CD14-positive monocyte (primary cell): ENCODE measurements at regions of chr10 and their contacts with region 1.

Region 1: GRCh38 chr10:5293691-5294550 is 70.8 kb upstream of the UCN3 start:
- DNase-seq: peak; percentile 70 to 82 (median 77)
- H3K4me3 ChIP-seq: peak overlapping the region in 1 of 3 experiments; percentile 15
- H3K4me3 Mint-ChIP-seq: peak overlapping the region; percentile 46 to 52
- H3K27ac ChIP-seq: peak overlapping the region; percentile 57 to 72
- H3K27ac Mint-ChIP-seq: peak overlapping the region; percentile 81 to 100 (median 99)
- H3K4me1 ChIP-seq: peaks cover 75 to 88% of the 10 kb centered on the region in 2 donors
- H3K4me1 Mint-ChIP-seq: peaks cover 77% of the 10 kb centered on the region
- H3K27me3 ChIP-seq: no peaks in the 10 kb centered on the region
- H3K27me3 Mint-ChIP-seq: peaks cover 0 to 4% (median 0%) of the 10 kb centered on the region in 3 donors
- CTCF ChIP-seq: peak; percentile 82

Region 2: DNA sequence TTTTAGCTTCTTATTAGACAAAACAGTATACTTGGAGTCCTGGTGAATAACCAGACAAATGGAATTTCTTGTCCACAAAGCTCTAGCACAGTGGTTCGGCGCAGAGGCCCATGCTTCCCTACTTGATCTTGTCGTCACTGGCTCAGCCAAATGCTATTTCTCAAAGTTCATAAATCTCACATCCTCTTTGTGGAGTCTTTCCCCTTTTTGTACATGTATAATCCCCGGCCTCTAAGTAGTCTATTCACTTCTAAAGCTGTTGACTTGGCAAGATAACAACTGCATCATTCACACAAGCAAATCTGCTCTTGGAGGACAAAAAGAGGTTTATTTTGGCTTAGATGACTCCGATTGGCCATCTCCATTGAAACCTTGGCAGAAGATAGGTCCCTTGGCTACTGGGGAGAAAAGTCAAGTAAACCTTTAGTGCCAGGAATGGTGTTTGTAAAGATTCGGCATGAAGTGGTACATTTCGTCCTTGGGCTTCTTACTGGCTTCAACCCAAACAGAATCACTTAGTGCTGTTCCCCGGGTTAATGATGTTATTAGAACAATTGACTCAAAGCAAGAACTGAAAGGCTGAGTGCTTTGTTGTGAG is 473.0 kb before region 1 on chr10:
- intact Hi-C with region 1: loop called in 1 of 2 experiments (anchors 5 kb)
- DNase-seq: peak; percentile 53 to 69 (median 55)
- H3K4me3 ChIP-seq: no peak overlapping the region
- H3K4me3 Mint-ChIP-seq: no peak overlapping the region
- H3K27ac ChIP-seq: peak overlapping the region; percentile 8 to 17
- H3K27ac Mint-ChIP-seq: peak overlapping the region in 5 of 7 donors; percentile 15 to 88 (median 80)
- H3K4me1 ChIP-seq: peaks cover 18 to 19% of the 10 kb centered on the region in 2 donors
- H3K4me1 Mint-ChIP-seq: peaks cover 23% of the 10 kb centered on the region
- H3K27me3 ChIP-seq: no peaks in the 10 kb centered on the region
- H3K27me3 Mint-ChIP-seq: peaks cover 3 to 12% (median 4%) of the 10 kb centered on the region in 3 donors
- CTCF ChIP-seq: no peak

Region 3: GRCh38 chr10:5234106-5234860 is 59.6 kb before region 1 on chr10:
- intact Hi-C with region 1: loop called in 1 of 2 experiments (anchors 10 kb)
- DNase-seq: peak; percentile 87 to 98 (median 93)
- H3K4me3 ChIP-seq: peak overlapping the region in 1 of 3 experiments; percentile 51
- H3K4me3 Mint-ChIP-seq: peak overlapping the region; percentile 28 to 63
- H3K27ac ChIP-seq: peak overlapping the region; percentile 62 to 79
- H3K27ac Mint-ChIP-seq: peak overlapping the region; percentile 55 to 88 (median 81)
- H3K4me1 ChIP-seq: peaks cover 21 to 22% of the 10 kb centered on the region in 2 donors
- H3K4me1 Mint-ChIP-seq: peaks cover 25% of the 10 kb centered on the region
- H3K27me3 ChIP-seq: no peaks in the 10 kb centered on the region
- H3K27me3 Mint-ChIP-seq: peaks cover 0 to 2% (median 0%) of the 10 kb centered on the region in 3 donors
- CTCF ChIP-seq: no peak